Mammary epithelial cell (primary cell): ENCODE measurements at regions of chr9 and their contacts with region 1.

Region 1: GRCh38 chr9:6055213-6055612 is 39.8 kb upstream of the RANBP6 start:
- DNase-seq: peak; percentile 90
- H3K4me3 ChIP-seq: no peak overlapping the region
- H3K27ac ChIP-seq: no peak overlapping the region
- H3K4me1 ChIP-seq: peaks cover 15% of the 10 kb centered on the region
- H3K27me3 ChIP-seq: no peaks in the 10 kb centered on the region
- CTCF ChIP-seq: peak; percentile 59 to 70

Region 2: DNA sequence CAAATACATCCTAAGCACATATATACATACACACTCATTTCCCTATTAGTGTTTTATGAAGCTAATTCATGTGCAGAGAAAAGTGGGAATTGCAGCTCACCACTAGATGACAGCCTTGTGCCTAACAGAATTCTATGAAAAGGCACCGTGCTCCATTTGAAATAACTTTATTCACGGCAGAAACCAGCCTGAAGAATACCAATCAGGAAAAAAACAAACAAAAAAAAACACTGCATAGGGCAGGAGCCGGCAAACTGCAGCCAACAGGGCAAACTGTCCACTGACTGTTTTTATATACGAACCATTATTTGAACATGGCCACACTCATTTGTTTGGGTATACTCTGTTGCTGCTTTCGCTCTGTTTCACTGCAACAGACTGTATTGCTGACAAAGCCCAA is 255.9 kb before region 1 on chr9:
- CTCF ChIA-PET with region 1: interaction called, 17 read pairs
- dilution Hi-C with region 1: no loop called
- in situ Hi-C with region 1: no loop called
- intact Hi-C with region 1: loop called (anchors 1 kb)
- DNase-seq: peak; percentile 42
- H3K4me3 ChIP-seq: no peak overlapping the region
- H3K27ac ChIP-seq: no peak overlapping the region
- H3K4me1 ChIP-seq: no peaks in the 10 kb centered on the region
- H3K27me3 ChIP-seq: no peaks in the 10 kb centered on the region
- CTCF ChIP-seq: peak; percentile 87 to 93

Region 3: DNA sequence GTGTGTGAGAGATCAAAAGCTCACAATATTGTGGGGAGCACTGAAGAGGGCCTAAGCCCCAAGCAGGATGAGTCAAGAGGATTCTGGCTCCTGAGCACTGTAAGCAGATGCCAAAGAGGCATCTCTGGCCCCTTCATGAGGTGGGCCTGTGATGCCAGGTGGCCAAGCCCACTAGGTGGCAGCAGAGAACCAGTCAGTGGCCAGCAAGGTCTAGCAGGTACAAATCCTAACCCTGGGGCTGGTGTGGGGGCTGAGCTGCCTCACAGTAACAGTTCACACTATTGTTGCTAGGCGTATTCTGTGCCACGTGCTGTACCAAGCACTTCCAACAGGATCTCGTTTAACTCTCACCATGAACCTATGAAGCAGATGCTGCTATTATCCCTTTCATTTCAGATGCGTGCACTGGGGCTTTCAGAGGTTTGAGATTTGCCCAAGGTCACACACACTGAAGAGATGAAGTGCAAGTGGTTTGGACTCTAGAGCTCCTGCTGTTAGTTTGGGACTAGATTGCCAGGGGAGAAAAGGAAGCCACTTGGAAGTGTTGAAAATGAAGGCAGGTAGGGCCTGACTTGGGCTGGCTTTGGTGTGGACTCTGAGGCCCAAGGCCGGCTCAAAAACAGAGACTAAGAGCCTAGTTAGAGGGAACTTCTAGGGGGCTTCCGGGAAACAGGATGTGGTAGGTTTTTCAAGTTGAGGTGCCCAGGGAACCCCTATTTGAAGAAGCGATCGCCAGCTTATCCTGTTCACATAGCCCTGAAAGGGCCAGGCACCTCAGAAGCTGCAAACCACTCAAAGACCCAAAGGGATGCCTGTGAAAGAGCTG is 168.9 kb before region 1 on chr9:
- CTCF ChIA-PET with region 1: interaction called, 11 read pairs
- dilution Hi-C with region 1: no loop called
- in situ Hi-C with region 1: no loop called
- intact Hi-C with region 1: loop called (anchors 1 kb)
- DNase-seq: peak; percentile 58
- H3K4me3 ChIP-seq: no peak overlapping the region
- H3K27ac ChIP-seq: no peak overlapping the region
- H3K4me1 ChIP-seq: peaks cover 7% of the 10 kb centered on the region
- H3K27me3 ChIP-seq: no peaks in the 10 kb centered on the region
- CTCF ChIP-seq: peak; percentile 98

Region 4: DNA sequence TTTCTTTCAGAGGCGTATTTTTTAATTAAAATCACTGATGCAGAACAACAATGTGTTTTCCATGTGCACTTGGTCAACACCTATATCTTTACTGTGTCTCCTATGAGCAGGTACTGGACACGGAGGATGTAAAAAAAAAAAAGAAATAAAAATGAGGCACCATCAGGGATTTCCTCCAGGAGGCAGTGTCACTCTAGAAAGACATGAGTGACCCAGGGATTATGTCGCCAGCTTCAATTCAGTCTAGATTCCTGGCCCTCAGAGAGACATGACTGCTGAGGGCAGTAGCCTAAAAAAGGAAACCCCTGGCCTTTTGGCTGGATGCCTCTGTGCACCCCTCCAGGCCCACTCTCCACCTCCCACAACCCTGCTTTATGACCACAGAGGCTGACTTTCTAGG is 142.1 kb after region 1 on chr9:
- CTCF ChIA-PET with region 1: no interaction called
- dilution Hi-C with region 1: no loop called
- in situ Hi-C with region 1: loop called in 1 of 2 experiments (anchors 25 kb)
- intact Hi-C with region 1: loop called (anchors 1 kb)
- DNase-seq: peak; percentile 24
- H3K4me3 ChIP-seq: no peak overlapping the region
- H3K27ac ChIP-seq: no peak overlapping the region
- H3K4me1 ChIP-seq: peaks cover 8% of the 10 kb centered on the region
- H3K27me3 ChIP-seq: no peaks in the 10 kb centered on the region
- CTCF ChIP-seq: peak; percentile 36 to 54

Region 5: DNA sequence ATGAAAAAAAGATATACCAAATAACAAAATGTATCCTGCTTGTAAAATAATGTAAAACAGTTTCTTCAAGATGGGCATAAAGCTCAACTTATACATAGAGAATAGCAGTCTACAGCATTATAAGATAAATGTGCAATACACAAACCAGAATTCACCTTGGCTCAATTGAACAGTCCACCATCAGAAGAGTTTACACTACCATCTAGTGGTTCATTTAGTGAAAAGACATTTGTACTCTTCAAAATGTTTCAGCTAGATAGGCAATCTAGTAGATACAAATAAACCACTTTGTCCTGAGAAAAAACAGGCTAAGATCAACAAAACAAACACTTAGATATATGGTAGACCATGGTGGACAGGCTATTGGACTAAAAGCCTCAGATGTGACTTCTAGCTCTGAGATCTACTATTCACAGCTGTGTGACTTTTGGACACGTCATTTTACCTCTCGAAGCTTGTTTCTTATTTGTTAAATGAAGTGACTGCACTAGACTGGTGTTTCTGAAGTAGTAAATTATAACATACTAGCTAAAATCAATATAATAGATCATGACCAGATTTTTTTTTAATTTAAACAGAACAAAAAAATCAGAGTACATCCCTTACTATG is 250.8 kb after region 1 on chr9:
- CTCF ChIA-PET with region 1: interaction called, 11 read pairs
- dilution Hi-C with region 1: no loop called
- in situ Hi-C with region 1: loop called (anchors 5 to 10 kb)
- intact Hi-C with region 1: loop called (anchors 1 kb)
- DNase-seq: peak; percentile 46
- H3K4me3 ChIP-seq: no peak overlapping the region
- H3K27ac ChIP-seq: no peak overlapping the region
- H3K4me1 ChIP-seq: peaks cover 8% of the 10 kb centered on the region
- H3K27me3 ChIP-seq: no peaks in the 10 kb centered on the region
- CTCF ChIP-seq: peak; percentile 52 to 64

Region 6: DNA sequence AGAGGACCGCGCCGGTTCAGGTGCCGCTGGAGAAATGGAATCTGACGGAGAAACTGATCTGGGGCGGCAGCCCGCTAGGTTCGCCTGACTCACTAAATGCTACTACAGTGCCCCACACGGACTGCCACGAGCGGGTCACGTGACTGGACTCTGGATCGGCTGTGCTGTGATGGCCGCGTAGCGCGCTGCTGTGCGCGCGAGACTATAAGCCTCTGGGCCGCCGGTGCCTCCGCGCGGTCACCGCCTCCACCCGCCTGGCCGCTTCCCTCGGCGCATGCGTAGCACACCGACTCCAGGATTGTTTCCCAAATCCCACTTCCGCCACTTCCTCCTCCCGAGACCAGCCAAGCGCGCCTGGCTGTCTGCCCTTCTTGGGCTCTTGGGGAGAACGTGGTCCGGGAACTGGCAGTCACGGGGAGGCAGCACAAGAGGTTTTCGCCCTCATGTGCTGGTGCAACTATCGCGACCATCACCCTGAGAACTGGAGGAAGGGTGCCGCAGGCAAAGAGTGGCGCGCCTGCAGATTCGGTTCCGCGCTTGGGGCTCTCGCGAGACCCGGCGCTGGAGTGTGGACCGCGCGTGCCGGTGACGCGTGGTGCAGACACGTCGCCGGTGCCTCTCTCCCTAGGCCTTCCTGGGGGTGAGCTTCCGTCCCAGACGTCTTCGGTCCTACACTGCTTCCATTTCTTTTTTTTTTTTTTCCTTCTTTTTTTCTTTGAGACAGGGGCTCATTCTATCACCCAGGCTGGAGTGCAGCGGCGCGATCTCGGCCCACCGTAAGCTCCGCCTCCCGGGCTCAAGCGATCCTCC is 626.1 kb after region 1 on chr9:
- CTCF ChIA-PET with region 1: no interaction called
- dilution Hi-C with region 1: no loop called
- in situ Hi-C with region 1: no loop called
- intact Hi-C with region 1: loop called (anchors 10 kb)
- DNase-seq: peak; percentile 96
- H3K4me3 ChIP-seq: peak overlapping the region; percentile 70 to 79 (median 75)
- H3K27ac ChIP-seq: peak overlapping the region; percentile 92
- H3K4me1 ChIP-seq: peaks cover 11% of the 10 kb centered on the region
- H3K27me3 ChIP-seq: no peaks in the 10 kb centered on the region
- CTCF ChIP-seq: no peak